HEK293 (cell line): ENCODE measurements at regions of chr4 and their contacts with region 1.

Region 1: DNA sequence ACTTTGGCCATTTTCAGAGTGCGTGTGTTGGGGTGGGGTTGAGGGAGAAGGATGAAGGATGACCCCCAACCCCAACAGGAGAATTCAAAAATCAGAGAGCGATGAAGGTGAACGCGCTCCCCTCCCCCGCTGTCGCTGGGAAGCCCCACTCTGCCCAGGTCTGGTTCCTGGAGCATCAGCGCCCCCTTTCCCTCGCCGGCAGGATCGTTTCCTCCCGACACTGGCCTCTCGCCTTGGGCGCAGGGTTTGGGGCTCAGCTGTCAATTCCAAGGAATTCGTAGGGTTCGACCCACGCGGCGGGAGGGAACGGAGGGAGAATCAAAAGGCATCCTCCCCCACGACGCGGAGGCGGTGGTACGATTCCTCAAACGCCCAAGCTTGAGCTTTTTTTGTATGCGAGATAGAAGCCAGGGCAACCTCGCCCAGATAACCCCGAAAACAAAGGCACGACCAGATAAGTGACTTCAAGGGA is 1.0 kb upstream of the PDGFRA start:
- H3K4me3 ChIP-seq: peak overlapping the region; percentile 52
- H3K27ac ChIP-seq: peak overlapping the region; percentile 62; the same call in 1 of the 2 replicates
- H3K4me1 ChIP-seq: no peaks in the 10 kb centered on the region
- CTCF ChIP-seq: peak; percentile 86

Region 2: DNA sequence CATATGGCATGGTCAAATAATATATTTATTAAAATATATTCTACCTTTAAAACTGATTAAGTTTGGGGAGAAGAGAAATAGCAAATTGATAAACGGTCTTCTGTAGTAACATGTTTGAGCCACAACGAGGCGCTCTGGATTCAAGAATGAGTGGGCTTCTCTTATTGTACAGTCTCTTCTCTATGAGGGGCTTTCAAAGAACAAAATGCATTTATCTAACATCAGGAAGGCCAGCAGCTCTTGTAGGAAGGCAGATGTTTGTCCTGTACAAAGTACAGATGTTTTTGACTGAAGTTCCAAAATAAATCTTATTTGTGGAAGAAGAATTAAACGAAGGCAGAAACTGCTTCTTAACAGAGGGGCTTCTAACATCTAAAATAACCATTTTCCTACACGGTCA is 1212.4 kb before region 1 on chr4:
- CTCF ChIA-PET with region 1: interaction called, 45 read pairs
- POLR2A ChIA-PET with region 1: no interaction called
- H3K4me3 ChIP-seq: no peak overlapping the region
- H3K27ac ChIP-seq: no peak overlapping the region
- H3K4me1 ChIP-seq: 0 out of 2 replicates have a peak, but pooled peaks cover 3% of the 10 kb centered on the region
- CTCF ChIP-seq: peak; percentile 37; the same call in 1 of the 2 replicates